Mammary epithelial cell (primary cell): ENCODE measurements at regions of chr5 and their contacts with region 1.

Region 1: DNA sequence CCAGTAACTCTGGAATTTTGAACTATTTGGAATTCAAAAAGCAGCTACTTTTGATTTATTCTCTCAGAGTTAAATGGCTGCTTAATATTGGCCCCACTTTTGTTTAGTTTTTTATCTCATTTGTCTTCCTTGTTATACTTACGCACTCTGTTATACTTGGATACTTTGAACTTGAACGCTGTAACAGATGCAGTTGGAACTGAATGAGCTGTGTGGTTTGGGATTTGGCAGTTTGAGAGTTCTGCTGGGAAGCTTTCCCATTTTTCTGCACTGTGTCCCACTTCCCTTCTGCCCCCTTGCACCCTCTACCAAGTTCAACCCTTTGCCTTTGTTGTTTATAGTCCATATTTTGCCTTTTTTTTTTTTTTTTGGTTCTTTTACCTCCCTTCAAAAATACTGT is 3.8 kb downstream of the RHOBTB3 start:
- DNase-seq: no peak
- H3K4me3 ChIP-seq: no peak overlapping the region
- H3K27ac ChIP-seq: no peak overlapping the region
- H3K4me1 ChIP-seq: peaks cover 5% of the 10 kb centered on the region
- H3K27me3 ChIP-seq: peaks cover 9% of the 10 kb centered on the region
- CTCF ChIP-seq: no peak

Region 2: GRCh38 chr5:95672486-95673469 is 62.1 kb before region 1 on chr5:
- CTCF ChIA-PET with region 1: interaction called, 12 read pairs
- dilution Hi-C with region 1: no loop called
- in situ Hi-C with region 1: no loop called
- intact Hi-C with region 1: no loop called
- DNase-seq: no peak
- H3K4me3 ChIP-seq: no peak overlapping the region
- H3K27ac ChIP-seq: no peak overlapping the region
- H3K4me1 ChIP-seq: no peaks in the 10 kb centered on the region
- H3K27me3 ChIP-seq: peaks cover 2% of the 10 kb centered on the region
- CTCF ChIP-seq: no peak